GM10248 (cell line): ENCODE measurements at regions of chr2 and their contacts with region 1.

Region 1: DNA sequence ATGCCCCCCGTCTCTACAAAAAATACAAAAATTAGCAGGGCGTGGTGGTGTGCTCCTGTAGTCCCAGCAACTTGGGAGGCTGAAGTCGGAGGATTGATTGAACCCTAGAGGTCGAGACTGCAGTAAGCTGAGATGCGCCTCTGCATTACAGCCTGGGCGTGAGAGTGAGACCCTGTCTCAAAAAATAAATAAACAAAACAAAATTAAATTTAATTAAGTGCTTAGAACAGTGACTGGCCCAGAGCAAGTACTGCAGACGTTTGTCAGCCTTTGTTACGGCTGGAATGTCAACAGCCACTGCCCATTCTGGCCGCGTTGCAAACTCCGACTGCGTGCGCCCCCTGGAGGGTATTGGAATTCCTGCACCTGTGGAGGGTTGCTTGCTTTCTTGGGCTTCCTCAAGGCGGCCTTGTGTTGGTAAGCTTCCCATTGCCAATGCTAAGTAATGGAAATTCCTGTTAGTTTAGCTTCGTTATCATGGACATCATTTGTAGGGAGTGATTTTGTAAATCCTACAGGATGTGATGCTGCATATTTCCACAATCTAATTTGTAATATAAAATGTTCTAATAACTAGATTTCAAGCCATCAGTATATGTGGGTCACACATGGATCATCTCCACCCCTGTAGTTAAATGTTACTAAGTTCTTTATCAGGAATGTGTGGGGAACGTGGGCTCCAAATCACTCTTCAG is 15.9 kb upstream of the ATP6V1B1 start:
- DNase-seq: peak; percentile 78
- CTCF ChIP-seq: peak; percentile 87

Region 2: DNA sequence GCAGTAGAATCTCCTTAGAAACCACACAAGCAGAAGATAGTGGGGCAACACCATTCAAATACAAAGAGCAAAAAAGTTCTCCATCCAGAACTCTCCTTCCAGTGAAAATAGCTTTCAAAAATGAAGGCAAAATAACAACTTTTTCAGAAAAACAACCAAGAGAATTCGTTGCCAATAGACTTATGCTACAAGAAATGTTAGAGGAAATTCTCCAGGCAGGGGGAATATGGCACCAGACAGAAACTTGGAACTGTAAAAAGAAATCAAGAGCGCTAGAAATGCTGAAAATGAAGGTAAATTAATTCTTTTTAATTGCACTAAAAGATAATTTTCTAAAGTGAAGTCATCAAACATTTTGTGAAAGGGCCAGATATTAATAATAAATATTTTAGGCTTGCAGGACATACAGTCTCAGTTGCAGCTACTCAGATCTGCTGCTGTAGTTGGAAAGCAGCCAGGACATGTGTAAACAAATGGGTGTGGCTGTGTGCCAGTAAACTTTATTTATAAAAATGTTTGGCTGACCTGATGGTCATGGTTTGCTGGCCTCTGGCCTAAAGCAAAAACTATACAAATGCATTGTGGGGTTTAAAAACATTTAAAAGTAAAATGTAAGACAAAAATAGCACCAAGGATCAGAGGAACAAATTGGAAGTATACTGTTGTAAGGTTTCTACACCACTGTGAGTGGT is 292.5 kb before region 1 on chr2:
- CTCF ChIA-PET with region 1: no interaction called
- POLR2A ChIA-PET with region 1: no interaction called
- DNase-seq: no peak
- CTCF ChIP-seq: no peak

Region 3: GRCh38 chr2:70789304-70790135 is 130.3 kb before region 1 on chr2:
- CTCF ChIA-PET with region 1: interaction called, 12 read pairs
- POLR2A ChIA-PET with region 1: no interaction called
- DNase-seq: peak; percentile 69
- CTCF ChIP-seq: peak; percentile 78

Region 4: DNA sequence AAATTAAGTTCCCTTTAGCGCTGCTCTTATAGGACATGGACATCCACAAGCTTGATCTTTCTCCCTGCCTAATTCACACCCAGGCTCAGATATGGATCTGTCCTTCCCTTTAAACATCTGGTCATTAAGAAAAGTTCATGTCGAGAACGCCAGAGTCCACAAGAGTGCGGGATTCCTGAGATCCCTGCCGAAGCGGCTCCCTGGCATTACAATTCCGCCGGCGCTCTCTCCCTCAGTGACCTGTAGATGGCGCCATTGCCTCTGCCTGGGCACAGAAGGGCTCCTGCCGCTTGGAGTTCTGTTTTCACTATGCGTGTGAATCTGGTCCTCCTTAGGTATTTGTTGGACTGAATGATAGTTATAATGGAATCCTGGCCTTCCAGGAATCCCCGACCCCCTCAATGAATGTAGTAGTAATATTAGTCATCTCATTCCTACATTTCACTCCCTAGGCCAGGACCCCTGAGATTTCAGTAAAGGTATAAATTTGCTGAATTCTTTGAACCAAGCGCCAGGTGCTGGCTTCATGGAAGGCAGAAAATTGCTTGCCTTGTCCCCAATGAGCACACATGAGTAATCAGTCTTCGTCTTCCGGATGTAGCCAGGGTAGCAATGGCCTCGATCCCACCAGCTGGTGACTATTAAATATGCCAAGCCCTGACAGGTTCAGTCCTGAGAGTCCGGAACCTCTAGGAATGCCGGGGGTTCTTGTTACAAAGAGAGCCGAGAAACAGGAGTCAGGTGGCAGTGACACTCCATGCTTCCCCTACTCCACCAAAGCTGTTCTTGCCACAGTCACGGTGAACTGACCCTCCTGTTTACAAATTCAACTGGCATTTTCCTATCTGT is 57.8 kb before region 1 on chr2:
- CTCF ChIA-PET with region 1: interaction called, 14 read pairs
- POLR2A ChIA-PET with region 1: no interaction called
- DNase-seq: peak; percentile 80
- CTCF ChIP-seq: peak; percentile 89

Region 5: DNA sequence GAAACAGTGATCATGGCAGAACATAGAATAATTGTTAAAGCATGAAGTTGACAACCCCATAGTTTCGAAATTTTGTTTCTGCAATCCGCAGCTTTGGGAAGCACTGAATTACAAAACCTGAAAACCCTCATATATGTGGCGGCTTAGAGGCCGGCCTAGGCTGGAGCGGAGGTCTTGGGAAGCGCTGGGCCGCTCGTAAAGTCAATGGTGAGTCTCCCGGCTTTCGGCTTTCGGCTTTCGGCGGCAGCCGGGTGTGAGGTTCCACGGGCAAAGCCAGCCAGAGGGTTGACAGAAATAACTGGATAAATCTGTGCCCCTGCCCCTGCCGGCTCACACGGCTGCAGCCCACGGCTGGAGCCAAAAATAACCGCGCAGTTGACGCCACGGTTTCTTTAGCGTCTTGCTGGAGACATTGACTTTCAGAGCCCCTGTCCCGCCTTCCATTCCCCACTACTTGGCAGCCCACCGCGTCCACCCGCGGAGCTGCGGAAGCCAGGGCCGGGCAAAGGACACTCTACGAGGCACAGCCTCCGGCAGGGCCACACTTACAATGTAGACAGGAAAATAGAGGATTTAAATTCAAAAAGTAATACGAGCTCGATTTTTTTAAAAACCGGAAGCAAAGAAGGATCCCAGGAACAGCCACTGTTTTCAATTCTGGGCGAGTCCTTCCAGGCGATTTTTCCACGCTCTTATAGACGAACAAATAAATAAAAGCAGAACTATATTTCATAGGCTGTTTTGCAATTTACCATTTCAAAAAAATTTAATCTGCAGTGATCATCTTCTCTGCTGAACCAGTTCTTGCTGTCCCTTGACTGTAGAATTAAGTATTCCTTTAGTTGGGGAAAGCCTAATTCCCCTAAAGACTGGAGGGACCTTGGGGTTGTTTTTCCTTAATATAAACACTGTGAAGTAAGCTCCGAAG is 12.4 kb before region 1 on chr2:
- CTCF ChIA-PET with region 1: interaction called, 16 read pairs
- POLR2A ChIA-PET with region 1: no interaction called
- DNase-seq: no peak
- CTCF ChIP-seq: no peak

Region 6: DNA sequence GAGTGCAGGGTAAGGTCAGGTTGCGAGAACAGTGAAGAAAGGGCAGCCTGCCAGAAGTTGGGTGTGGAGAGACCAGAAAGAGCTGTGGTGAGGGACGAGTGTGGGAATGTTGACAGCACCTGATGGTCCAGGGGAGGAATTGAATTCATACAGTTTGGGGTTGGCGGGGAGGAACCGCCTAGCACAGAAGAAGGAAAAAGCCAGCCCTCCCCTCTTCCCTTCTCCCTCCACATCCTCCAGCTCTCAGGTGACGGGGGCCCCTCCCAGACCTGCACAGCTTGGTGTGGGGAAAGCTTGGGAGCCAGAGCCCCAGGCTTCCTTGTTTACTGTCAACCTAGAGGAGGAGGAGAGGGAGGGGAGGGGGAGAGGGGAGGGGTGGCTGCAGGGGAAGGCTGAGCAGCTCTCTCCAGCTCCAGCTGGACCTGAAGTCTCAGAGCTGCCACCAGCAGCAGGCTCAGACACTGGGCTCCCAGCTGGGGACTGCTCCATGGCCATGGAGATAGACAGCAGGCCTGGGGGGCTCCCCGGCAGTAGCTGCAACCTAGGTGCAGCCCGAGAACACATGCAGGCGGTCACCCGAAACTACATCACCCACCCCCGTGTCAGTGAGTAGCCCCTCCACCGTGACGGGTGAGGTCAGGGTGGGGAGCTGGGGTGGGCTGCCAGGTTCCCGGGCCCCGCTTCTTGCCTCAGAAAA is 15.8 kb after region 1 on chr2 and contains the start of gene ATP6V1B1:
- CTCF ChIA-PET with region 1: interaction called, 10 read pairs
- POLR2A ChIA-PET with region 1: no interaction called
- DNase-seq: no peak
- CTCF ChIP-seq: no peak

Region 7: GRCh38 chr2:71130113-71130904 is 210.5 kb after region 1 on chr2 and contains the starts of genes MCEE and MPHOSPH10:
- CTCF ChIA-PET with region 1: no interaction called
- POLR2A ChIA-PET with region 1: no interaction called
- DNase-seq: peak; percentile 93
- CTCF ChIP-seq: no peak